WTC11 (cell line): ENCODE measurements at regions of chr3 and their contacts with region 1.

Region 1: GRCh38 chr3:120506828-120507774 is 56.3 kb upstream of the FSTL1 start:
- DNase-seq: peak; percentile 39
- ATAC-seq: 0 out of 2 replicates have a peak, but pooled peaks have one; percentile 17
- H3K4me3 Mint-ChIP-seq: no peak overlapping the region
- H3K27ac Mint-ChIP-seq: no peak overlapping the region
- H3K4me1 Mint-ChIP-seq: peaks cover 26% of the 10 kb centered on the region
- H3K27me3 Mint-ChIP-seq: no peaks in the 10 kb centered on the region
- CTCF ChIP-seq: peak; percentile 52

Region 2: DNA sequence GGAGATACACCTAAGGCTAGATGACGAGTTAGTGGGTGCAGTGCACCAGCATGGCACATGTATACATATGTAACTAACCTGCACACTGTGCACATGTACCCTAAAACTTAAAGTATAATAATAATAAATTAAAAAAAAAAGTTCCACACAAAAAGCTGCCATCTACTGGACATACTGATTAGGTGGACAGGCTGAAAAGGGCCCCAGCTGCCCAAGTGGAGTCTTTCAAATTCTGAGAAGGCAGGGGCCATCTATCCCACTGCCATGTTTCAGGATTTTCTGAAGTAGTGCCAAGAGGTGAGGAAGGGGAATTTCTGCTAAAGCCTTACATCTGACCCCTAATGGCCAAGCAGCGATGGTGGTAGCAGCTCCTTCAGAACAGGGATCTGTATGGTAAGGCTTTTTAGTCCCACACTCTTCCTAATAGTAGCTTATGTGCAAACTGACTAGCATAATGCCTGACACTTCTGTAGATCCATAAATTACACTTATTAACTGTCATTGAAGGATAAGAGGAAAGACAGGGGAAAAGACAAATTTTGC is 64.1 kb before region 1 on chr3:
- CTCF ChIA-PET with region 1: interaction called, 10 read pairs
- POLR2A ChIA-PET with region 1: interaction called, 3 read pairs
- DNase-seq: no peak
- ATAC-seq: peak; percentile 78
- H3K4me3 Mint-ChIP-seq: no peak overlapping the region
- H3K27ac Mint-ChIP-seq: peak overlapping the region; percentile 14; the same call in 1 of the 2 replicates
- H3K4me1 Mint-ChIP-seq: peaks cover 40% of the 10 kb centered on the region
- H3K27me3 Mint-ChIP-seq: no peaks in the 10 kb centered on the region
- CTCF ChIP-seq: no peak